ENCODE measurements at regions of chr2 and their contacts with region 1.

Region 1: DNA sequence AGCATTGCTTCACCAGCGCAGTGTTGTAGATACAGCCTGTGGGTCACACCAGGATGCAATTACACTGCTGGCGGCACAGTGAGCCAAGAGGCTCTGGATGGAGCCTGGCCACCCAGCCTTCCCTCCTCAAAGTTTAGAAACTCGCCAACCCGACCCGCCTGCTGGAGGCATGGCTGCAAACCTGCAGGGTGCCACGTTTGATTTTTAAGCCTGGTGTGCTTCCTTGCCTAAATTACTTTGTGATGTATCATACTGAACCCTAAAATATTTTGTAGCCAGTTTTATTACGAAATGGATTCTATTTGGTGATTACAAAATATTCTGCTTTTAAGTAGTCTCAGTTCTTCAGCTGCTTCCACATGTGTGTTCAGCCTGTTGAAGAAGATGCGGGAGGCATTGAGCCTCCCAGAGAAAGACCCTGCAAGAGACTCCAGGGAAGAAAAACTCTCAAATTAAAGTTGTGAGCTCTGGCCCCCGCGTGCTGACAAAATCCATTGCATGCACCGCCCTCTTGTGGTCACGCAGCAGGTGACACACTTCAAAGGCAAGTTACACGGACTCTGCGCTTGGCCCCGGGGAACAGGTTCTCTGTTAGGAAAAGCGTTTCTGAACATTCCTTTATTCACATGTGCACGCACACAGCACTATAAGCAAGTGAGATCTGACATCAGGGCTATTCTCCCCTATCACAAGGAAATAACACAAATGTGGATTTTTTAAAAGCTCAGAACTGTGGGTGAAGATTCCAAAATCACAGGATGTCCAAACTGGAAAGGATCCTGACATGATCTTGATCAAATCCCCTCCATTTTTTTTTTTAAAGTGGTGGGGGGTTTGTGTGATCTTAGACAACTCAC is 63.0 kb upstream of the TWIST2 start:
- DNase-seq: no peak
- ATAC-seq: peak; percentile 83
- H3K4me3 ChIP-seq: no peak overlapping the region
- H3K27ac ChIP-seq: no peak overlapping the region
- H3K4me1 ChIP-seq: no peaks in the 10 kb centered on the region
- H3K27me3 ChIP-seq: no peaks in the 10 kb centered on the region; a peak in 1 of 4 replicates
- CTCF ChIP-seq: peak; percentile 78 to 88 (median 85)
- EP300 ChIP-seq: no peak
- POLR2A ChIP-seq: no peak
- RAD21 ChIP-seq: peak; percentile 77

Region 2: GRCh38 chr2:238352361-238352760 is 432.5 kb before region 1 on chr2:
- CTCF ChIA-PET with region 1: no interaction called
- POLR2A ChIA-PET with region 1: no interaction called
- RAD21 ChIA-PET with region 1: interaction called, 3 read pairs
- SMC1A ChIA-PET with region 1: no interaction called
- in situ Hi-C with region 1: loop called (anchors 10 kb)
- intact Hi-C with region 1: loop called (anchors 2 kb)
- DNase-seq: no peak
- ATAC-seq: no peak
- H3K4me3 ChIP-seq: no peak overlapping the region
- H3K27ac ChIP-seq: no peak overlapping the region
- H3K4me1 ChIP-seq: no peaks in the 10 kb centered on the region
- H3K27me3 ChIP-seq: no peaks in the 10 kb centered on the region
- CTCF ChIP-seq: no peak
- EP300 ChIP-seq: no peak
- POLR2A ChIP-seq: no peak
- RAD21 ChIP-seq: no peak

Region 3: GRCh38 chr2:238362626-238363025 is 422.3 kb before region 1 on chr2:
- CTCF ChIA-PET with region 1: no interaction called
- POLR2A ChIA-PET with region 1: no interaction called
- RAD21 ChIA-PET with region 1: interaction called, 3 read pairs
- SMC1A ChIA-PET with region 1: no interaction called
- in situ Hi-C with region 1: loop called (anchors 10 kb)
- intact Hi-C with region 1: loop called (anchors 2 kb)
- DNase-seq: no peak
- ATAC-seq: no peak
- H3K4me3 ChIP-seq: no peak overlapping the region
- H3K27ac ChIP-seq: no peak overlapping the region
- H3K4me1 ChIP-seq: peaks cover 4% of the 10 kb centered on the region; the same call in 1 of the 2 replicates
- H3K27me3 ChIP-seq: no peaks in the 10 kb centered on the region
- CTCF ChIP-seq: no peak
- EP300 ChIP-seq: no peak
- POLR2A ChIP-seq: no peak
- RAD21 ChIP-seq: no peak

Region 4: DNA sequence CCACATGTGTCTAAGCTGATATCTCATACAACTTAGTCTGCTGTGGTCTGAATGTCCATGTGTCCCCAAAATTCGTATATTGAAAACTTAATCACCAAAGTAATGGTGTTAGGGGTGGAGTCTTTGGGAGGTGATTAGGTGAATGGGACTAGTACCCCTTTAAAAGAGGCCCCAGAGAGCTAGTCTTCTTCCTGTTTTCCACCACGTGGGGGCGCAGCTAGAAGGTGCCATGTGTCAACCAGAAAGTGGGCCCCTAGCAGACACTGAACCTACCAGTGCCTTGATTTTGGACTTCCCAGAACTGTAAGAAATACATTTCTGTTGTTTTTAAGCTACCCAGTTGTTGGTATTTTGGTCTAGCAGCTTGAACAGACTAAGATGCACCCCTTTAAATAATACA is 271.6 kb before region 1 on chr2:
- CTCF ChIA-PET with region 1: interaction called, 25 read pairs
- POLR2A ChIA-PET with region 1: no interaction called
- RAD21 ChIA-PET with region 1: interaction called, 11 read pairs
- SMC1A ChIA-PET with region 1: no interaction called
- in situ Hi-C with region 1: no loop called
- intact Hi-C with region 1: loop called (anchors 1 kb)
- DNase-seq: no peak
- ATAC-seq: peak; percentile 74
- H3K4me3 ChIP-seq: no peak overlapping the region
- H3K27ac ChIP-seq: no peak overlapping the region
- H3K4me1 ChIP-seq: no peaks in the 10 kb centered on the region
- H3K27me3 ChIP-seq: peaks cover 0 to 2% of the 10 kb centered on the region in 2 experiments; a peak in 1 of 4 replicates
- CTCF ChIP-seq: peak; percentile 36 to 49 (median 41); a peak in 5 of 6 replicates
- EP300 ChIP-seq: no peak
- POLR2A ChIP-seq: no peak
- RAD21 ChIP-seq: peak; percentile 33; the same call in 1 of the 2 replicates

Measured in GM12878 (cell line).